Endothelial cell of umbilical vein (primary cell): ENCODE measurements at regions of chr9 and their contacts with region 1.

Region 1: GRCh38 chr9:127899128-127899946 is at the start of gene ST6GALNAC6:
- DNase-seq: peak; percentile 56
- H3K4me3 ChIP-seq: peak within 1 kb of the TSS; percentile 60 to 74 (median 62)
- H3K27ac ChIP-seq: peak within 1 kb of the TSS; percentile 35
- H3K4me1 ChIP-seq: peaks cover 25% of the 10 kb centered on the region
- H3K27me3 ChIP-seq: no peaks in the 10 kb centered on the region
- CTCF ChIP-seq: no peak
- POLR2A ChIP-seq: peak; percentile 57
- total RNA-seq, gene ST6GALNAC6: 43.0 and 43.5 TPM in 2 replicates

Region 2: GRCh38 chr9:127205183-127205470 is 694.2 kb before region 1 on chr9:
- CTCF ChIA-PET with region 1: no interaction called
- POLR2A ChIA-PET with region 1: no interaction called
- dilution Hi-C with region 1: no loop called
- intact Hi-C with region 1: no loop called
- DNase-seq: no peak
- H3K4me3 ChIP-seq: no peak overlapping the region
- H3K27ac ChIP-seq: no peak overlapping the region
- H3K4me1 ChIP-seq: no peaks in the 10 kb centered on the region
- H3K27me3 ChIP-seq: peaks cover 0 to 1% of the 10 kb centered on the region in 2 experiments
- CTCF ChIP-seq: peak in 1 of 2 donors; percentile 21
- POLR2A ChIP-seq: no peak

Region 3: GRCh38 chr9:127877566-127877998 is 21.8 kb before region 1 on chr9 and contains the start of gene AK1:
- CTCF ChIA-PET with region 1: interaction called, 3 read pairs
- POLR2A ChIA-PET with region 1: interaction called, 7 read pairs
- dilution Hi-C with region 1: no loop called
- intact Hi-C with region 1: loop called (anchors 1 kb)
- DNase-seq: peak; percentile 63
- H3K4me3 ChIP-seq: peak within 1 kb of the TSS; percentile 23 to 55 (median 44)
- H3K27ac ChIP-seq: peak within 1 kb of the TSS; percentile 31
- H3K4me1 ChIP-seq: peaks cover 17% of the 10 kb centered on the region
- H3K27me3 ChIP-seq: no peaks in the 10 kb centered on the region
- CTCF ChIP-seq: no peak
- POLR2A ChIP-seq: peak; percentile 86
- total RNA-seq, gene AK1: 113 and 115 TPM in 2 replicates

Region 4: DNA sequence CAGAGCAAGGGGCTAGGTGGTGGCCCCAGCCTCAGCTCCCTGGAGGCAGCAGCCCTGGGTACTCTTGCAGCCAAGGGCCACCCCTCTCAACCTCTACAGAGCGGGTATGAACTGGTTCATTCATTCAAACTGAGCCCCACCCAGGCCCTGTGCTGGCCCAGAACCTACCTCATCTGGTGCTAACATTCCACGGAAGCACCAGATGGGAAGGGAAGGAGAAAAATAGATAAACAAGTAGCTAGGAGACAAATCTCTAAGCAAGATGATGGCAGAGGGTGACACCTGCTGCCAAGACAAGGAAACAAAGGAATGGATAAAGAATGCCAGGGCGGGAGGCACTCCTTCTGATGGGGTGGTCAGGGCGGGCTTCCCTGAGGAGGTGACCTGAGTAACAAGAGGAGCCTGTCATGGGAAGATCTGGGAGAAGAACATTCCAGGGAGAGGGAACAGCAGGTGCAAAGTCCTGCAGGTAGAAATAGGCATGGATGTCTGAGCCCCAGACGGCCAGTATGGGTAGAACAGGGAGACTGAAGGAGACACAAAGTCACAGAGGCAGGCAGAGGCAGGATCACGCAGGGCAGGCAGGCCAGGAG is 11.4 kb after region 1 on chr9:
- CTCF ChIA-PET with region 1: interaction called, 12 read pairs
- POLR2A ChIA-PET with region 1: no interaction called
- dilution Hi-C with region 1: no loop called
- intact Hi-C with region 1: no loop called
- DNase-seq: peak; percentile 50
- H3K4me3 ChIP-seq: no peak overlapping the region
- H3K27ac ChIP-seq: no peak overlapping the region
- H3K4me1 ChIP-seq: peaks cover 21% of the 10 kb centered on the region
- H3K27me3 ChIP-seq: no peaks in the 10 kb centered on the region
- CTCF ChIP-seq: peak in 1 of 2 donors; percentile 19
- POLR2A ChIP-seq: no peak